ENCODE measurements at regions of chr15 and their contacts with region 1.

Region 1: DNA sequence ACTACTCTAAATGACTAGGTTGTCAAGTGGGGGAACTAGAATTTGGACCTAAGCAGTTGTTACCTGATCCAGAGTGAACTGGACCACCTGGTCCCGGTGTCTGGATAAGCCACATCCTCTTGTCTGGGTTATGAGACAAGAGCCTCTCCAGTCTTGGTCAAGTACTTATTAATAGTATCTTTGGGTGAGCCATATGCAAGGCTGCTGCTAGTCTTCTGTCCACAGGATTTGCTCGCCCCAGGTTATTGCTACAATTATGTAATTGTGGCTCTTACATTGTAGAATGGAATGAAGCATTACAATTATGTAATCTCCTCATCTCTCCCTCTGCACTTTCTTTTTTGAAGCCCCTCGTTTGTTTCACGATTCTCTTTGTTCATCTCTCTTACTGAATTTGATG is 24.0 kb upstream of the AGBL1 start:
- DNase-seq: no peak
- H3K4me3 ChIP-seq: no peak overlapping the region
- H3K27ac ChIP-seq: no peak overlapping the region
- H3K4me1 ChIP-seq: no peaks in the 10 kb centered on the region
- H3K27me3 ChIP-seq: no peaks in the 10 kb centered on the region
- CTCF ChIP-seq: no peak
- POLR2A ChIP-seq: no peak

Region 2: GRCh38 chr15:85993116-85993515 is 62.6 kb before region 1 on chr15:
- intact Hi-C with region 1: loop called (anchors 10 kb)
- DNase-seq: no peak
- H3K4me3 ChIP-seq: no peak overlapping the region
- H3K27ac ChIP-seq: no peak overlapping the region
- H3K4me1 ChIP-seq: no peaks in the 10 kb centered on the region
- H3K27me3 ChIP-seq: no peaks in the 10 kb centered on the region
- CTCF ChIP-seq: no peak
- POLR2A ChIP-seq: no peak